H1 (cell line): ENCODE measurements at regions of chr10 and their contacts with region 1.

Region 1: DNA sequence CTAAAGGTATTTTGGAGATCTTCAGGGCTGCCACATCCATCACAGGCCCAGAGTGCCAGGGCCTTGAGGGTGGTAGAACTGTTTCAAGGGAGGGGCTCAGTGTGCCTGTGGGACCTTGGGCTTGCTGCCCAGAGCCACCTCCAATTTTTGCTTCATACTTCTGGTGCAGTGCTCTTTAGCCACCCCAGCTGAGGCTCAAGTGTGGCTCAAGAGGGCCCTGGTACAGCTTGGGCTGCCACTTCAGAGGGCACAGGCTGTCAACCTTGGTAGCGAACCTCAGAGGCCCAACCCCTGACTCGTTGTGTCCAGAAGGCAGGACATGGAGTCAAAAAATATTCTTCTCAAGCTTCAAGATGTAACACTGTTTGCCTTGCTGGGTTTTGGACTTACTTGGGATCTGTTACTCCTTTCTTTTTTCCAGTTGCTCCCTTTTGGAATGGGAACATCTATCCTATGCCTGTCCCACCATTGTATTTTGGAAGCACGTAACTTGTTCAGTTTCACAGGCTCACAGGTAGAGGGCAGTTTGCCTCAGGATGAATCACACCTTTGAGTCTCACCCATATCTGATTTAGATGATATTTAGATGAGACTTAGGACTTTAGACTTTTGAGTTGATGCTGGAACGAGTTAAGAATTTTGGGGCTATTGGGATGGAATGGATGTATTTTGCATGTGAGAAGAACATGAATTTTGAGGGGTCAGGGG is 224.8 kb downstream of the RPS24 start:
- DNase-seq: no peak
- H3K4me3 ChIP-seq: no peak overlapping the region
- H3K27ac ChIP-seq: no peak overlapping the region
- H3K4me1 ChIP-seq: 0 out of 7 replicates have a peak, but pooled peaks cover 0 to 2% (median 0%) of the 10 kb centered on the region in 4 experiments
- H3K27me3 ChIP-seq: no peaks in the 10 kb centered on the region
- CTCF ChIP-seq: peak in 2 of 3 experiments; percentile 31 to 58; a peak in 3 of 4 replicates
- EP300 ChIP-seq: no peak
- POLR2A ChIP-seq: no peak
- RAD21 ChIP-seq: peak; percentile 57 to 60

Region 2: DNA sequence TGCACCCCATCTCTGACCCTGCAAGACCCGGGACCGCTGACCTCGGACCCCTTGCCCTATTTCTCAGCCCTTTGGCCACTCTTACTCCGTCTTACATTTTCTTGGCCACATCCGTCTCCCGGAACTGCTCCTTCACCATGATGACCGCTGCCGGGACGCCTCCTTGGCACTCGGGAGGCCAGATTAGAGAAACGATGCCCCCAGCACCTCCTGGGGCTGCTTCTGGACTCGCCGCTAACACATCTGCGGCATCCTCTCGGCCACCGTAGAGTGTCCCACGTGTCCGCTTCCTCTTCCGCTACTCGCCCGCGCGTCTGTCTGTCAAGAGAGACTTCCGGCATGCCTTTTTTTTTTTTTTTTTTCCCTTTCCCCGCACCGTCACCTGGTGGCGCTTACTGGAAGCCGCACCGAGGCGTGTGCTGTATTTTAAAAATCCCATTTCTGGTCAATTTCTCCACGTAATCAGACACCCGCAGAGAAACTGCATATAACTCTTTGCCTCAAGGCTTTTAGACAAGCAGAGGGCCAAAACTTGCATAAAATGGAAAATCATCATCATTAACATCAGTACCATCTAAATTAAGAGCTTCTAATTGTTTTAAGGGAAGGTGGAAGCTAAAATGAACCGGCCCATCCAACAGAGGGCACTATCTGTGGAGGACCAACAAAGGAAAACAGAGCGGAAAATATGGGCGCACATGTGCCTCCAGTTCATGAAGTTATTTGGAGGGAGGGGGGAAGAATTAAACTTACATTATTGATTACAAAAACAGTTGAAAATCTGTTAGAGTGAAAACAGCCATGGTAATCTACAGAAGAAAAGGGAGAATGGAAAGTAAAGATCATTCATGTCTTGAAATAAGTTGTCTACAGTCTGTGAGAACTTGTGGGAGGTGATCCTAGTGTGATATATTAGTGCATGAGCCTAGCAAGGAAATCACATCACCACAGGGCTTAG is 228.9 kb before region 1 on chr10 and contains the start of gene POLR3A:
- CTCF ChIA-PET with region 1: no interaction called
- POLR2A ChIA-PET with region 1: no interaction called
- DNase-seq: peak; percentile 89 to 91
- H3K4me3 ChIP-seq: peak within 1 kb of the TSS; percentile 75 to 89 (median 82)
- H3K27ac ChIP-seq: peak within 1 kb of the TSS; percentile 55; the same call in 1 of the 2 replicates
- H3K4me1 ChIP-seq: no peaks in the 10 kb centered on the region; a peak in 1 of 7 replicates
- H3K27me3 ChIP-seq: no peaks in the 10 kb centered on the region; a peak in 2 of 7 replicates
- CTCF ChIP-seq: peak; percentile 42 to 66 (median 46)
- EP300 ChIP-seq: peak in 1 of 2 experiments; percentile 42; a peak in 1 of 3 replicates
- POLR2A ChIP-seq: no peak; a peak in 1 of 3 replicates
- RAD21 ChIP-seq: peak in 1 of 2 experiments; percentile 7; a peak in 1 of 4 replicates
- total RNA-seq, gene POLR3A: 35.8 and 38.6 TPM in 2 replicates

Region 3: DNA sequence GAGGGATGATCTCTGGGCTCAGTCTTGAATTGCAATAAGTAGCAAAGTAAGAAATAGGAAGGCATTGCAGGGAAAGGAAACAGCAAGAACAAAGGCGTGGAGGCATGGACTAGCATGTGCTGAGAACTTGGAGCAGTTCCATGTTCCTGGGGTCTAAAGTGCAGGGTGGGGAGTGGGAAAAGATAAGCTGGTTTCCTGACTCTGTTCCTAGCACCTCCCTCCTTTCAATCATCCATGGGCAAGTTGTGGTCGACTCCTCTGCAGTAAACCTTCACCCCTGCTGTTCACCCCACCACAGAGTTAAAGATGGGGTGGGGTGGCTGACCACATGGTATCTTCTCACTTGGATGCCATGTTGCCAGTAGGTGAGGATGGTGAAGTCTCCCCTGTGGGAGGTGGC is 195.2 kb before region 1 on chr10:
- CTCF ChIA-PET with region 1: no interaction called
- POLR2A ChIA-PET with region 1: no interaction called
- DNase-seq: no peak
- H3K4me3 ChIP-seq: no peak overlapping the region
- H3K27ac ChIP-seq: no peak overlapping the region
- H3K4me1 ChIP-seq: peaks cover 0 to 4% (median 0%) of the 10 kb centered on the region in 4 experiments; a peak in 2 of 7 replicates
- H3K27me3 ChIP-seq: no peaks in the 10 kb centered on the region; a peak in 1 of 7 replicates
- CTCF ChIP-seq: no peak
- EP300 ChIP-seq: no peak
- POLR2A ChIP-seq: no peak
- RAD21 ChIP-seq: no peak

Region 4: GRCh38 chr10:78231939-78232338 is 26.5 kb before region 1 on chr10:
- CTCF ChIA-PET with region 1: interaction called, 16 read pairs
- POLR2A ChIA-PET with region 1: no interaction called
- DNase-seq: no peak
- H3K4me3 ChIP-seq: no peak overlapping the region
- H3K27ac ChIP-seq: no peak overlapping the region
- H3K4me1 ChIP-seq: no peaks in the 10 kb centered on the region
- H3K27me3 ChIP-seq: no peaks in the 10 kb centered on the region; a peak in 1 of 7 replicates
- CTCF ChIP-seq: peak in 2 of 3 experiments; percentile 30 to 52; a peak in 2 of 4 replicates
- EP300 ChIP-seq: no peak
- POLR2A ChIP-seq: no peak
- RAD21 ChIP-seq: peak; percentile 44 to 65

Region 5: DNA sequence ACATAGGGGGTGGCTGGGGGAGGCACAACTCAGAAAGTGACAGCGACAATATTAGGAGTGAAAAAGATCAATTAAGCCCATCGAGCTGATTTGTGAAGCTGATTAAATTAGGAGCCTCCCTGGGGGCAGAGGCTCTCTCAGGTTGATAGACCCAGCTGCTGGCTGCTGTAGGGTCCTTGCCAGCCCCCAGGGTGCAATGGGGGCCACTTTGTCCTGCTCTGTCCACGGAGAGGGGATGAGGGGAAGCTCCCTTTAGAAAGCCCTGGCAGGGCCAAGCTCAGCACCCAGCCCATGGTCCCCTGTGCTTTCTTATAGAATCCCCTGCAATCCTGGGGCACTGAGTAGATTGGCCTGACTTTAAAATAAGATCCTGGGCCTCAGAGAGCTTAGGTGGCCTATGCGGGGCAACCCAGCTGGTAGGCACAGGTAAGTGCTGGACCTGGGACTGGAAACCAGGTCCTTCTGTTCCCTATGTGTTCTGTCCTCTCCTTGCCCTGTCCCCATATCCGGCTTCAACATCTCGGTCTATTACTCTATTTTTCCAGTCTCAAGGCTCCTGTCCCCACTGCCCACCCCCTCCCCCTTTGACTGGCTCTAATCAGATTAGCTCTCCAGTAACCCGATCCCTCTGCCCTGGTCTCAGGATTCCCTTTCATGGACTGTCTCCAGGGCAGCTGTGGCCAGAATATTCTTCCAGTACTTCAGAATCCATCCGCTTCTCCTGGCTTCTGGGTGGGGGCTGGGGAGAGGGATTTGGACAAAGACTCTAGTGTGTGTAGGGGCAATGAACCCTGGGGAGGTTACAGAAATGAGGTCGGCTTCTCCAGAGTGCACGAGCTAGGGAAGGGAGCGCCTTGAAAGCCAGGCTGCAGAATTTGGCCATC is 34.7 kb after region 1 on chr10:
- CTCF ChIA-PET with region 1: interaction called, 15 read pairs
- POLR2A ChIA-PET with region 1: no interaction called
- DNase-seq: no peak
- H3K4me3 ChIP-seq: peak overlapping the region in 1 of 4 experiments; percentile 11; a peak in 1 of 8 replicates
- H3K27ac ChIP-seq: no peak overlapping the region
- H3K4me1 ChIP-seq: peaks cover 3 to 12% (median 8%) of the 10 kb centered on the region in 4 experiments; a peak in 5 of 7 replicates
- H3K27me3 ChIP-seq: peaks cover 0 to 4% (median 0%) of the 10 kb centered on the region in 4 experiments; a peak in 1 of 7 replicates
- CTCF ChIP-seq: no peak
- EP300 ChIP-seq: no peak
- POLR2A ChIP-seq: no peak
- RAD21 ChIP-seq: no peak

Region 6: DNA sequence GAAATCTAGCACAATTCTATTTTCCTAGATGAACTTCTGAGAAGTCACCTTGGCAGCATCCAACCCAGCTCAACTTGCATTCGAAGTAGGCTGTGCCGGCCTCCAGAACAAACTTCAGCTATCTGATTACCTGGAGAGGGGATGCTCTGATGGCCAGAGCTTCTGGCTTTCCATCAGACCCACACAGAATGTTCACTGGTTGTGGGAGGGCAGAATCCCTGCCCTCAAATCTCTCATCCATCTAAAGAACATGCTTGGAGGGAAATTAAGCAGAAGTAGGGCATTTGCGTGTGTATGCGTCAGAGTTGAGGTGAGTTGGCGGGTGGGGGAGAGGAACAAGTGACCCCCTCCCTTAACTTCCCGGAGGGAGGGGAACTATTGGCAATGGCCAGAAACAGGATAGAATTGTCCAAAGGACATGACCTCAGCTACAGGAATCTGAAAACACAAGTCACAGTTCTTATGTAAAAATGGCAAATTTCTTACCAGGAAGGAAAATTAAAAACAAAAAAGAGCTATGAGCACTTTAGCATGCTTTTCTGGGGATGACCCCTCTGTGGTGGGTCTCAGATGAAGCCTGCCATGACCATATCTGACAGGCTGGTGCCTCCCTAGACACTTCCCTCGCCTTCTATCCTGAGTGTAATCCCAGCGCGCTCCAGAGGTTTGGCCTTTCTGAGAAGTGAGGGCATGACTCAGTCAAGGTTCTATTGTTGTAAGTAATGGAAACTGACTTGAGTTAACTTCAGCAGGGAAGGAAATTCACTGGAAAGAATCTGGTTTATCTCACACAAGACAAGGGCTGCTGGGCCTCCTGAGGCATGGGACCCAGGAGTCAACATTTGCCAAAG is 53.9 kb after region 1 on chr10:
- CTCF ChIA-PET with region 1: interaction called, 20 read pairs
- POLR2A ChIA-PET with region 1: no interaction called
- DNase-seq: peak in 1 of 2 experiments; percentile 20
- H3K4me3 ChIP-seq: no peak overlapping the region
- H3K27ac ChIP-seq: no peak overlapping the region
- H3K4me1 ChIP-seq: no peaks in the 10 kb centered on the region; a peak in 1 of 7 replicates
- H3K27me3 ChIP-seq: no peaks in the 10 kb centered on the region
- CTCF ChIP-seq: no peak
- EP300 ChIP-seq: no peak
- POLR2A ChIP-seq: no peak
- RAD21 ChIP-seq: no peak

Region 7: DNA sequence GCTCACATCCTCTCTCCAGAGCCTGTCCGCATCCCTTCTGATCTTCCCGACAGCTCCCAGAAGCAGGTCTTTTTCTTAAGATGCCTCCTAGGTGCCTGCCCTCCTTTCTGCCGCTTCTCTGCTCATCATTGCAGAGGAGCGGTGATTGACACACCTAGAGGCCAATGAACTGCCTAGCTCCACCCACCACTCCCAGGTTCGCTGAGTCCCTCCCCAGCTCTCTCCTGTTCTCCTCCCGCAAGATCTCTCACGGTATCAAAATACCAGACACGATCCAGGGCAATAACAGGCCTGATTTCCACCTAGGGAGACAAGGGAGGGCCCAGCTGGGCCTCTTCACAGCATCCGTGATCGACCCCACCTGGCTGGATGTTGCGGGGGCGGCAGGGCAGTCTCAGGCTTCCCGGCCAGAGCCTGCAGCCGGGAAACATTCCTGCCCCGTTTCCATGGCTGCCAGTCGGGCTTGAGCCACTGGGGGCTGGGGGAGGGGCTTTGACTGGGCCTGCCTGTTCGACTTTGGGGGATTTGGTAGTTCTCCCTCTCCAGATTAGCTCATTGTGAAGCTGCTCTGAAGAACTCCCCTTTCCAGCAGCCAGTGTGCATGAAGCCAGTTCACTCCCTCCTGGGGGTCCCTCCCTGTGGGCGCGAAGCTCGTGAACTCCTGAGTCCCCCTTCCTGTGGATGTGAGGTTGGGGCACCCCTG is 148.7 kb after region 1 on chr10:
- CTCF ChIA-PET with region 1: interaction called, 11 read pairs
- POLR2A ChIA-PET with region 1: no interaction called
- DNase-seq: peak; percentile 92 to 95
- H3K4me3 ChIP-seq: peak overlapping the region; percentile 63 to 90 (median 83)
- H3K27ac ChIP-seq: peak overlapping the region; percentile 97
- H3K4me1 ChIP-seq: peaks cover 0 to 13% (median 7%) of the 10 kb centered on the region in 4 experiments; a peak in 5 of 7 replicates
- H3K27me3 ChIP-seq: peaks cover 0 to 2% (median 0%) of the 10 kb centered on the region in 4 experiments; a peak in 1 of 7 replicates
- CTCF ChIP-seq: no peak
- EP300 ChIP-seq: 0 out of 3 replicates have a peak, but pooled peaks of 1 of the 2 experiments have one; percentile 39
- POLR2A ChIP-seq: peak in 1 of 2 experiments; percentile 43; a peak in 2 of 3 replicates
- RAD21 ChIP-seq: 0 out of 4 replicates have a peak, but pooled peaks of 1 of the 2 experiments have one; percentile 0